ENCODE measurements at regions of chr7 and their contacts with region 1.

Region 1: GRCh38 chr7:154231732-154232131 is 179.5 kb downstream of the DPP6 start:
- DNase-seq: no peak
- ATAC-seq: no peak

Region 2: GRCh38 chr7:154242709-154243108 is 11.0 kb after region 1 on chr7:
- intact Hi-C with region 1: loop called in 1 of 2 experiments (anchors 1 kb)
- DNase-seq: no peak
- ATAC-seq: no peak

Region 3: GRCh38 chr7:154353355-154353767 is 121.6 kb after region 1 on chr7:
- intact Hi-C with region 1: no loop called
- DNase-seq: no peak
- ATAC-seq: no peak